ENCODE measurements at regions of chr11 and their contacts with region 1.

Region 1: GRCh38 chr11:18588297-18589252 is at the start of gene UEVLD:
- DNase-seq: peak; percentile 92 to 94 (median 93)
- ATAC-seq: peak; percentile 93 to 99 (median 97)
- H3K4me3 ChIP-seq: peak within 1 kb of the TSS; percentile 68 to 97 (median 86)
- H3K27ac ChIP-seq: peak within 1 kb of the TSS; percentile 51 to 91 (median 86)
- H3K4me1 ChIP-seq: peaks cover 4 to 42% (median 30%) of the 10 kb centered on the region in 12 donors
- H3K27me3 ChIP-seq: no peaks in the 10 kb centered on the region
- CTCF ChIP-seq: no peak
- POLR2A ChIP-seq: peak in 1 of 2 donors; percentile 73
- total RNA-seq, gene UEVLD: 16.9 to 37.8 (median 23.1) TPM

Region 2: GRCh38 chr11:18526521-18527296 is 61.9 kb before region 1 on chr11 and contains the start of gene TSG101:
- intact Hi-C with region 1: loop called in 1 of 10 experiments (anchors 2 kb)
- DNase-seq: peak; percentile 94 to 97 (median 97)
- ATAC-seq: peak; percentile 99
- H3K4me3 ChIP-seq: peak within 1 kb of the TSS; percentile 48 to 96 (median 90)
- H3K27ac ChIP-seq: peak within 1 kb of the TSS; percentile 83 to 98 (median 94)
- H3K4me1 ChIP-seq: peaks cover 0 to 39% (median 16%) of the 10 kb centered on the region in 12 donors
- H3K27me3 ChIP-seq: no peaks in the 10 kb centered on the region
- CTCF ChIP-seq: no peak
- POLR2A ChIP-seq: peak; percentile 7 to 87
- total RNA-seq, gene TSG101: 58.6 to 156 (median 69.1) TPM

Region 3: DNA sequence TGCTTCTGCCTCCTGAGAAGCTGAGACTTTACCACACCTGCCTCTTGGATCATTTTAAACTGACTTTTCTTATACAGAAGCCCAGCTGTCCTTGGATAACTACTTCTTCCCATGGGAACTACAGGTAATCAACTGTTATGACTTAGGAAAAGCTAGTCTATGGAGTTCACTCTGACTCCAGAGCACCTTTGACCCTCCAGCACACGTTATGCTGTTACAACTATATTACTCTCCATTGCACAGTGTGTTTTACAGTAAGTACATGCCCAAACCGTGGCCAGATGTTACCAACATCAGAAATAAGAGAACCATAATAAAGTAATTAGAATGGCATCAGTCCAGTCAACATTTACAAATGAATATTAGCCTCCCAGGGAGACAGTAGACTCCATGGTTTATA is 40.6 kb before region 1 on chr11:
- intact Hi-C with region 1: no loop called
- DNase-seq: no peak
- ATAC-seq: no peak
- H3K4me3 ChIP-seq: no peak overlapping the region
- H3K27ac ChIP-seq: no peak overlapping the region
- H3K4me1 ChIP-seq: no peaks in the 10 kb centered on the region
- H3K27me3 ChIP-seq: no peaks in the 10 kb centered on the region
- CTCF ChIP-seq: no peak
- POLR2A ChIP-seq: no peak

Region 4: GRCh38 chr11:18698341-18699268 is 110.0 kb after region 1 on chr11 and contains the start of gene TMEM86A:
- intact Hi-C with region 1: loop called in 2 of 10 experiments (anchors 5 kb)
- DNase-seq: peak; percentile 94 to 98 (median 95)
- ATAC-seq: peak; percentile 79 to 96 (median 91)
- H3K4me3 ChIP-seq: peak within 1 kb of the TSS; percentile 64 to 97 (median 86)
- H3K27ac ChIP-seq: peak within 1 kb of the TSS; percentile 38 to 97 (median 87)
- H3K4me1 ChIP-seq: peaks cover 0 to 37% (median 21%) of the 10 kb centered on the region in 12 donors
- H3K27me3 ChIP-seq: no peaks in the 10 kb centered on the region
- CTCF ChIP-seq: no peak
- POLR2A ChIP-seq: peak; percentile 84 to 87
- total RNA-seq, gene TMEM86A: 2.3 to 13.1 (median 4.9) TPM

Region 5: DNA sequence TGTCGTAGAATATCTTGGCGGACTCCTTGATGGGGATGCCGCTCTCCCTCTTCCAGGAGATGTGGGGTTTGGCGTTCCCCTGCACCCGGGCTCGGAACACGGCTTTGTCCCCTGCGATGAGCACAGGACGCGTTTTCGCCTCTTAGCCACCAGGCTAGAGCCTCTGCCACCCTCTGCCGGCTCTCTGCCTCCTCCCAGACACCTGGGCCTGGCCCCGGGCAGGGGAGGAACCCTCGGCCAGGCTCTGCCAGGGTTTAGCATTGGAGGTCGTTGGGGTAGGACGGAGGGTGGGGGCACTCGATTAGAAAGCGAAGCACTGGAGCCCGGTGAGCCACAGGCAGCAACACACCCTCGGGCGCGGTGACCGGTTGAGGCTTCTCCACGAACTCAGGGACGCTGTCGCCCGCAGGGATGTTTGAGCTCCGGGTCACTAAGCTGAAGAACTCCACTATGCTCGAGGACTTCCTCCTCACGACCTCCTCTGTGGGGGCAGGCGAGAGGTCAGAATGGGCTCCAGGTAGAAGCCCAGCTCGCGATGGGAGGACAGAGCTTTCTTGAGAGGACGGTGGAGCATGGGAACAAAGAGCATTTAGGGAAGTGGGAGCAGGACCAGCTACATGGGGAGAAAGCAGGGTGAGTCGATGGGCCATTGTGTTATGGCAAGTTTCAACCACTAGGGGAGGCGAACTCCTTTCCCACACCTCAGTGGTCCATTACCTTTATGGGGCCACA is 133.2 kb after region 1 on chr11:
- intact Hi-C with region 1: loop called in 4 of 10 experiments (anchors 1 to 5 kb)
- DNase-seq: no peak
- ATAC-seq: peak; percentile 60 to 80 (median 68)
- H3K4me3 ChIP-seq: peak overlapping the region; percentile 40 to 89 (median 65)
- H3K27ac ChIP-seq: peak overlapping the region in 10 of 12 donors; percentile 10 to 79 (median 60)
- H3K4me1 ChIP-seq: peaks cover 0 to 22% (median 8%) of the 10 kb centered on the region in 12 donors
- H3K27me3 ChIP-seq: no peaks in the 10 kb centered on the region
- CTCF ChIP-seq: peak; percentile 52 to 86 (median 73)
- POLR2A ChIP-seq: no peak